SK-N-SH (cell line): ENCODE measurements at regions of chr15 and their contacts with region 1.

Region 1: GRCh38 chr15:74906446-74907162 is at the start of gene FAM219B:
- DNase-seq: peak; percentile 98
- H3K4me3 ChIP-seq: peak within 1 kb of the TSS; percentile 86 to 89
- H3K27ac ChIP-seq: peak within 1 kb of the TSS; percentile 58 to 84
- H3K4me1 ChIP-seq: peaks cover 4 to 18% of the 10 kb centered on the region in 2 experiments; a peak in 3 of 4 replicates
- H3K27me3 ChIP-seq: no peaks in the 10 kb centered on the region
- CTCF ChIP-seq: no peak
- EP300 ChIP-seq: no peak
- RAD21 ChIP-seq: no peak
- polyA plus RNA-seq, gene FAM219B: 53.0 and 90.2 TPM in 2 replicates

Region 2: DNA sequence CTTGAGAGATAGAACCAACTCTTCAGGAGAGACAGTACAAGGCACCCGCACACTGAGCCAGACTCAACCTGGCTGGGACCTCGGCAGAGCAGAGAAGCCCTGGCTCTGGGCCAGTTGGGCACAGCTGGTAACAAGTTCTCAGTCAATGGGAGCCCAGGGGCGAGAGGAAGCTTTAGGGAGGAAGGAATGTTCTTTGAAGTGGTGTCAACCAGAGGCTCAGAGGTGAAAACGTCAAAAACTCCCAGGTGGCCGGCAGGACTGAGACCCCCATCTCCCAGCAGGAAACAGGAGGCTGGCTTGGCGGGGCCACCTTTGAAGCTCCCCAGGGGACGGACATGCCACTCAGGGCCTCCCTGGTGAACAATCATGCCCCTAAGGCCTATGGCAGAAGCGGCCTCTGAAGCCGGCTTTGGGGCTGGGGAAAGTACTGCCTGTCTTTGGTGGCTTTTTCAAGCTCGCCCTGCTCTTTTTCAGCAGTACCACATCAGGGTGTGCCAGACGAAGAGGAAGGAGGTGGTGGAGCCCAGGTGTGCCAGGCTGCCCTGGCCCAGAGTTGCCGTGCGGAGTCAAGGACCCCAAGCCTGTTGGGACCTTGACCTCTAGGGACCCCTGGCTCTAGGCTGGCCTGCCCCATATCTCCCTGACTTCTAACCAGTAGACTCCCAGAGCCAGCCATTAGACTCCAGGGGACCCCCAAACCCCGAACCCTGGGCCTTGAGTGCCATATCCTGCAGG is 1050.0 kb before region 1 on chr15:
- CTCF ChIA-PET with region 1: no interaction called
- POLR2A ChIA-PET with region 1: no interaction called
- DNase-seq: peak; percentile 27
- H3K4me3 ChIP-seq: no peak overlapping the region
- H3K27ac ChIP-seq: no peak overlapping the region
- H3K4me1 ChIP-seq: peaks cover 0 to 3% of the 10 kb centered on the region in 2 experiments; a peak in 1 of 4 replicates
- H3K27me3 ChIP-seq: peaks cover 7% of the 10 kb centered on the region; the same call in 1 of the 2 replicates
- CTCF ChIP-seq: no peak
- EP300 ChIP-seq: no peak
- RAD21 ChIP-seq: no peak

Region 3: DNA sequence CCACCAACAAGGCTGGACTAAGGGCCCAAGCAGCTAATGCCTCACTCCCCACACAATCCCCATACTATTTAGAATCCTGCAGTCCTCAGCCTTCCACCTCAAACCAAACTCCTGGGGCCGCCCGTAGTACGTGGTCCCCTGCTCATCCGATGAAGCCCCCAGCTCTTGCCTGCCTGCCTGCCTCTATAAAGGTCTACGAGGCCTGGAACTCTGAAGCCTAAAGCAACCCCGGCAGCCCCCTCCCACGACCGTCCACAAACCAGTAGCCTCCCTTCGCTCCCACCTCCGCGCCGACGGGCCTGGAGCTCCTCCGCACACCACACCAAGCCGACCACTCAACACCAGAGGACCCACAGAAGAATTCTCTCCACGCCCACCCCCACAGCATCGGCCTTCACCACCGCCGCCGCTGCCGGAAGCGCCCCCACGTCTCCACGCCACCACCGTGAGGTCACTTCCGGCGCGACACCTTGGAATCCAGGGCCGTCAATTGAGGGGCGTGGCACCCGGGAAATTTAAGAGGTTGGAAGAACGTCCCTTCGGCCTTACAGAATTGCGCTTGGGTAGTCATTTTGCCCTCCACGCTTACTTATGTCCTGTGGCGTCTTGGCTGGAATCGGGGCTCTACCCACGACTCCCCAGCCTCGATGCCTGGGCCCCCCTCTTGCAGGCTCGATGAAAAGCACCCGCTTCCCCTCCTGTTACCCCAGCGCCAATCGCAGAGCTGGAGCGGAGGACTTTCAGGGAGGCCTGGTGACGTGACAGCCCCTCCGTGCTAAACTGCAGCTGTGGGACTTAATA is 210.8 kb before region 1 on chr15 and contains the start of gene EDC3:
- CTCF ChIA-PET with region 1: no interaction called
- POLR2A ChIA-PET with region 1: no interaction called
- DNase-seq: peak; percentile 92
- H3K4me3 ChIP-seq: peak within 1 kb of the TSS; percentile 91 to 96
- H3K27ac ChIP-seq: peak within 1 kb of the TSS; percentile 61 to 70; a peak in 2 of 4 replicates
- H3K4me1 ChIP-seq: peaks cover 10 to 12% of the 10 kb centered on the region in 2 experiments; a peak in 3 of 4 replicates
- H3K27me3 ChIP-seq: no peaks in the 10 kb centered on the region
- CTCF ChIP-seq: no peak
- EP300 ChIP-seq: no peak
- RAD21 ChIP-seq: no peak
- polyA plus RNA-seq, gene EDC3: 34.9 and 44.5 TPM in 2 replicates

Region 4: GRCh38 chr15:74787251-74788041 is 119.2 kb before region 1 on chr15:
- CTCF ChIA-PET with region 1: interaction called, 17 read pairs
- POLR2A ChIA-PET with region 1: no interaction called
- DNase-seq: peak; percentile 69
- H3K4me3 ChIP-seq: no peak overlapping the region; a peak in 1 of 4 replicates
- H3K27ac ChIP-seq: 0 out of 4 replicates have a peak overlapping the region, but pooled peaks of 1 of the 2 experiments have one; percentile 17
- H3K4me1 ChIP-seq: peaks cover 21 to 70% of the 10 kb centered on the region in 2 experiments
- H3K27me3 ChIP-seq: no peaks in the 10 kb centered on the region
- CTCF ChIP-seq: peak; percentile 55
- EP300 ChIP-seq: no peak
- RAD21 ChIP-seq: 0 out of 2 replicates have a peak, but pooled peaks have one; percentile 13

Region 5: GRCh38 chr15:74842581-74843444 is 63.8 kb before region 1 on chr15 and contains the start of gene ULK3:
- CTCF ChIA-PET with region 1: interaction called, 12 read pairs
- POLR2A ChIA-PET with region 1: no interaction called
- DNase-seq: peak; percentile 99
- H3K4me3 ChIP-seq: peak within 1 kb of the TSS; percentile 98
- H3K27ac ChIP-seq: peak within 1 kb of the TSS; percentile 72 to 88
- H3K4me1 ChIP-seq: peaks cover 0 to 23% of the 10 kb centered on the region in 2 experiments; a peak in 2 of 4 replicates
- H3K27me3 ChIP-seq: no peaks in the 10 kb centered on the region
- CTCF ChIP-seq: peak; percentile 50
- EP300 ChIP-seq: no peak
- RAD21 ChIP-seq: peak; percentile 34; the same call in 1 of the 2 replicates
- polyA plus RNA-seq, gene ULK3: 41.3 and 55.3 TPM in 2 replicates

Region 6: DNA sequence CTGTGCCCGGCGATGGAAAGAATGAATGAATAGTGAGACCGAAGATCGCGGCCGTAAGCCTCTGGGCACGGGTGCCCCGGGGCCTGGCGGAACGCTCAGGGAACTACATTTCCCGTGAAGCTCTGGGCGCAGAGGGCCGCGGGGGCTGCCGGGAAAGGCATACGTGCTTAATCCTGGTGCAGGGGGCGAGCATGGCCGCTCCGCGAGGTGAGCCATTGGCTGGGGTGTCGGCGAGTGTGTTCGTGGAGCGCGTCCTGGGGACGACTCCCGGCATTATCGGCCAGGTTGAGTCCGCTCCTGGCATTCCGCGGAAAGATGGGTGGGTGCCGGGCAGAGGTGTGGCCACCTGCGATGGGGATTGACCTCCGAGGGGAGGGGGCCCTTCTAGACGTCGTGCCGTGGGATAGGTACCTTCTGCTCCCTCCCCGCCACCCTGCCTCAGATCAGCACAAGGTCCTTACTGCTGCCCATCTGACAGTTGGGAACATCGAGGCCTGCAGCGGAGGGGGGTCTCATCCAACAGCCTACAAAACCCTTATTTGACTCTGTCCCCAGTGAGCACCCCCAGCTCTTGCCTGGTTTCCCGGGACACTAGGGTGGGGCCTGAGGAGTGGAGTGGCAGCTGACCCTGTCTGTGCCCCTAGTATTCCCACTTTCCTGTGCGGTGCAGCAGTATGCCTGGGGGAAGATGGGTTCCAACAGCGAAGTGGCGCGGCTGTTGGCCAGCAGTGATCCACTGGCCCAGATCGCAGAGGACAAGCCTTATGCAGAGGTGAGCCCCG is 16.5 kb before region 1 on chr15 and contains the start of gene MPI:
- CTCF ChIA-PET with region 1: interaction called, 21 read pairs
- POLR2A ChIA-PET with region 1: interaction called, 9 read pairs
- DNase-seq: peak; percentile 97
- H3K4me3 ChIP-seq: peak within 1 kb of the TSS; percentile 89 to 92
- H3K27ac ChIP-seq: peak within 1 kb of the TSS in 1 of 2 experiments; percentile 87; a peak in 3 of 4 replicates
- H3K4me1 ChIP-seq: peaks cover 0 to 16% of the 10 kb centered on the region in 2 experiments; a peak in 1 of 4 replicates
- H3K27me3 ChIP-seq: no peaks in the 10 kb centered on the region
- CTCF ChIP-seq: no peak
- EP300 ChIP-seq: no peak
- RAD21 ChIP-seq: no peak
- polyA plus RNA-seq, gene MPI: 58.2 and 63.5 TPM in 2 replicates

Region 7: DNA sequence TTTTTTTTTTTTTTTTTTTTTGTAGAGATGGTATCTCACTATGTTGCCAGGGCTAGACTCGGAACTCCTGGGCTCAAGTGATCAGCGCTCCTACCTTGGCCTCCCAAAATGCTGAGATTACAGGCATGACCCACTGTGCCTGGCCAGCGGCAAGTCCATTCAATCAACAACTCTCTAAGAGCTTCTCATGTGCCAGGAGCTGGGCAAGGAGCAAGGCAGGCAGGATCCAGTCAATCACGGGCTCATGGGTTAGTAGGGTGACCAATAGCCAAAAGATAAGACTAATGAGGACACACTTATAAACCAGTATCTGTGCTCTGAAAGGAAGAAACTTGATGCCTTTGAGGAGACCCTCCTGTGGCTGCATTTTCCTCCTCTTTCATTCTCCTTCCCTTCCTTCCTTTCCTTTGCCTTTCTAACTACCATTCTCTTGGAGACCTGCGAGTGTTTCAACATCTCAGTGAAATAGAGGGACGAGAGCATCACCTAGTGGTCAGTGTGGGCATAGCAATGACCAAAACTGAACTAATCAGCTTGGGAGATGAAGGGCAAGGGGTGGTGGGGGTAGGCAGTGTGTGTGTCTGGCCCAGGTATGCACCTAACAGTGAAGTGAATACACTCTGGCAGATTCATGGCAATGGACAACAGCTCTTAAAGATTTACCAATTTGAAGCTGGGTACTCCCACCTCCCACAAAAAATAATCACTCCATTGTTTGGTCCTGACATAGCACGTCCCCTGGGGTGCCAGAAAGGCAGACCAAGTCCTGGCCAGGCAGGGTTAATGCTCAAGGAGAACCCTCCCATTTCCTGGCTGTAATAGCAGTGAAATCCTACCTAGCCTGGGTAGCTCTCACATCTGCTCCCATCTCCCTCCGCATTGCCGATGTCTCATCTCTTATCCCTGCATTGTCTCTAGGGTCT is 43.7 kb after region 1 on chr15:
- CTCF ChIA-PET with region 1: interaction called, 33 read pairs
- POLR2A ChIA-PET with region 1: interaction called, 9 read pairs
- DNase-seq: peak; percentile 67
- H3K4me3 ChIP-seq: no peak overlapping the region; a peak in 1 of 4 replicates
- H3K27ac ChIP-seq: no peak overlapping the region; a peak in 1 of 4 replicates
- H3K4me1 ChIP-seq: peaks cover 0 to 18% of the 10 kb centered on the region in 2 experiments; a peak in 1 of 4 replicates
- H3K27me3 ChIP-seq: no peaks in the 10 kb centered on the region
- CTCF ChIP-seq: peak; percentile 98
- EP300 ChIP-seq: 0 out of 4 replicates have a peak, but pooled peaks of 1 of the 2 experiments have one; percentile 10
- RAD21 ChIP-seq: peak; percentile 96

Region 8: GRCh38 chr15:74995241-74995778 is 88.7 kb after region 1 on chr15 and contains the start of gene SCAMP5:
- CTCF ChIA-PET with region 1: interaction called, 13 read pairs
- POLR2A ChIA-PET with region 1: interaction called, 11 read pairs
- DNase-seq: peak; percentile 97
- H3K4me3 ChIP-seq: peak within 1 kb of the TSS; percentile 67 to 84
- H3K27ac ChIP-seq: peak within 1 kb of the TSS in 1 of 2 experiments; percentile 90; a peak in 2 of 4 replicates
- H3K4me1 ChIP-seq: peaks cover 0 to 17% of the 10 kb centered on the region in 2 experiments; a peak in 1 of 4 replicates
- H3K27me3 ChIP-seq: no peaks in the 10 kb centered on the region
- CTCF ChIP-seq: no peak
- EP300 ChIP-seq: 0 out of 4 replicates have a peak, but pooled peaks of 1 of the 2 experiments have one; percentile 2
- RAD21 ChIP-seq: no peak
- polyA plus RNA-seq, gene SCAMP5: 27.9 and 32.7 TPM in 2 replicates